ENCODE measurements at regions of chr1 and their contacts with region 1.

Region 1: DNA sequence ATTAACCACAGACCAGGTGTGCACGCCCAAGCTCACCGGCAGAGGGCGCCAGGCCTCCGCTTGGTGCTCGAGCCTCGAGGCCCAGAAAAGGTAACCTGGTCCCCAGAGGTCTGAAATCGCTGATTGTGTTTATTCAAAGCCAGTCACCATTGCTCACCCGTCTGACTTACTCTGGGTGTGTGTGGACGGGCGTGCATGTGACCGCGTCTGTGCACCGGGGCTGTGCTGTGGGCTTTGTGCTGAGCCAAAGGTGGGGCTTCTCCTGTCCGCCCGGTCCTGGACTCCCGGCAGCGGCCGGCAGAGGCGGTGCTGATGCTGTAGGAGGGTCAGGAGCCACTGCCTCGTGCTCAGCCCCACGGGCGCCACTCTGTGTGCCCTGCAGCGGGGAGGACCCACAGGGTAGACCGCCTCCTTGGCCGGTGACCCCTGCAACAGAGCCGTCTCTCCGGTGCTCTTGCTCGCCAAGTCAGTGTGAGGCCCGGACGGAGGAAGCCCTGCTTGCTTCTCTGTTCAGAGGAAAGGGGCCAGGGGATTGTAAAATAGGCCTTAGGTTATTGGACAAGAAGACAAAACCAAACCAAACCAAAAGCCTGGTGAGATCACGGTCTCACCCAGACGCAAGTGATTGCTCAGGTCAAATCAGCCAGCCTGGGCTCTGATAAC is 32.0 kb upstream of the BTG2 start:
- DNase-seq: peak; percentile 86 to 97 (median 92)
- ATAC-seq: peak; percentile 53
- H3K4me3 ChIP-seq: peak overlapping the region; percentile 49
- H3K4me3 Mint-ChIP-seq: peak overlapping the region; percentile 55
- H3K27ac ChIP-seq: peak overlapping the region; percentile 33 to 73
- H3K27ac Mint-ChIP-seq: peak overlapping the region; percentile 85
- H3K4me1 ChIP-seq: peaks cover 75% of the 10 kb centered on the region
- H3K4me1 Mint-ChIP-seq: peaks cover 63% of the 10 kb centered on the region
- H3K27me3 ChIP-seq: no peaks in the 10 kb centered on the region
- H3K27me3 Mint-ChIP-seq: no peaks in the 10 kb centered on the region
- CTCF ChIP-seq: peak; percentile 97

Region 2: DNA sequence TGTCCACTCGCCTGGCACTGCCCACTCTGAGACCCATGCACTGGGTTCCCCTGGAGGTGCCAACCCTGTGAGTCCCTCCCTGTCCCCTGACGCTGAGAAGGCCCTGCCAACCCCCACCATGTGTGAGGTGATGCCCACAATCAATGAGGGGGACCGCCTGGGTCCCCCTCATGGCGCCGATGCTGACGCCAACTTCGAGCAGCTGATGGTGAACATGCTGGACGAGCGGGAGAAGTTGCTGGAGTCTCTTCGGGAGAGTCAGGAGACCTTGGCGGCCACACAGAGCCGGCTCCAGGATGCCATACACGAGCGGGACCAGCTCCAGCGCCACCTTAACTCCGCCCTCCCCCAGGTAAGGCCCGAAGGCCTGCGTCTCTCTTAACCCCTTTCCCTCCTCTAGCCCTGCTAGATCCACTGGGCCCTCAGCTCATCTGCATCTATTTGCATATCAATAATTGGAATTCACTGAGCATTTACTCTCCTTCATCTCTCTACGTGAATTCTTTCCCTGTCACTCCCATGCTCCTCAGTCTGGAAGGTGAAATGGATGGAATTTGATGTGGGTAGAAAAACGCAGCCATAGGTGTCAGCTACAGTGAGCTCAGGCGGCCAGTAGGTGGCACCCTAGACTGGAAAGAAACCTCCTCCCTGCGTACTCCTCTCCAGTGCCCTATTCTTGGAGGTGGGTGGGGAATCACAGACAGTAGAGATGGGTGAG is 234.3 kb before region 1 on chr1:
- CTCF ChIA-PET with region 1: interaction called, 3 read pairs
- POLR2A ChIA-PET with region 1: no interaction called
- intact Hi-C with region 1: loop called (anchors 2 kb)
- DNase-seq: peak; percentile 39 to 80 (median 53)
- ATAC-seq: peak; percentile 94
- H3K4me3 ChIP-seq: no peak overlapping the region
- H3K4me3 Mint-ChIP-seq: no peak overlapping the region
- H3K27ac ChIP-seq: no peak overlapping the region
- H3K27ac Mint-ChIP-seq: no peak overlapping the region
- H3K4me1 ChIP-seq: no peaks in the 10 kb centered on the region
- H3K4me1 Mint-ChIP-seq: no peaks in the 10 kb centered on the region
- H3K27me3 ChIP-seq: peaks cover 4 to 6% of the 10 kb centered on the region in 2 experiments
- H3K27me3 Mint-ChIP-seq: peaks cover 6% of the 10 kb centered on the region
- CTCF ChIP-seq: peak; percentile 81

Region 3: DNA sequence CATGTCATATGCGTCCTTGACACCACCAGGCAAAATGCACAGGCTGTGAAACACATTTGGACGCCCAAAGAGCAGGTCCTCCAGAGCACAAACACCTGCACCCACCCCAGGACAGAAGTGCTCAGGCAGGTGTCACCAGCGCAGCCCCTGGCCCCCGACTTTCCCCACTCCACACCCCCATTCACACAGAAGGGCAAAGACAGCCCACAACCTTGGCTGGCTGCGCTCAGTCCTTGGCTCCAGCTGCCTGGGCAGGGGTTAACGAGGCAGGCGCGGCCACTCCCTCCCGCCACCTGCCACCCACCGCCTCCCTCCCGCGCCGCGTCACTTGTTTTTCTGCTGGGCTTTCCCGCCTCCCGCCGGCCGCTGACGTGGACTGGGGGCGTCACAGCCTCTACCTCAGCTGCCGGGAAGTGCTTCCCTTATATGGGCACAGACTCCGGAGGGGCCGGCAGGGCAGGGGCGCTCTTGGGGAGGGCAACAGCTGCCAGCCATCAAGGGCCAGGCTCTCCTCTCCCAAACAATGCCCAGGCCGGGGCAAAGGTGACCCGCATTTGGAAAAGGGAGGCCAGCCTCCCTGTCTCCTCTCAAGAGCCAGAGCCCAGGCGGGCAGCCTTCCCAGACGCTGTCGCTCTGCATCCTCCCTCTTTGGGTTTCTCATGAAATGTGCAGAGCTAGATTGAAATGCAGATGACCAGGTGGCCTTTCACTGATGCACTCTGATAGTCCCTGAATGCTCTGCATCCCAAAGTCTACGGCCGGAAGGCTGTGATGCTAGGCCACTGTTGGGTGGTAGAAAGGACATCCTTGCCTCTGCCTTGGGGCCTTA is 17.1 kb after region 1 on chr1:
- CTCF ChIA-PET with region 1: interaction called, 34 read pairs
- POLR2A ChIA-PET with region 1: interaction called, 187 read pairs
- intact Hi-C with region 1: loop called (anchors 1 kb)
- DNase-seq: peak; percentile 95 to 99 (median 98)
- ATAC-seq: peak; percentile 55
- H3K4me3 ChIP-seq: peak overlapping the region; percentile 52
- H3K4me3 Mint-ChIP-seq: peak overlapping the region; percentile 88
- H3K27ac ChIP-seq: peak overlapping the region; percentile 99
- H3K27ac Mint-ChIP-seq: peak overlapping the region; percentile 100
- H3K4me1 ChIP-seq: peaks cover 63% of the 10 kb centered on the region
- H3K4me1 Mint-ChIP-seq: peaks cover 91% of the 10 kb centered on the region
- H3K27me3 ChIP-seq: no peaks in the 10 kb centered on the region
- H3K27me3 Mint-ChIP-seq: no peaks in the 10 kb centered on the region
- CTCF ChIP-seq: no peak

Region 4: GRCh38 chr1:203299169-203299568 is 25.8 kb after region 1 on chr1:
- CTCF ChIA-PET with region 1: interaction called, 15 read pairs
- POLR2A ChIA-PET with region 1: interaction called, 6 read pairs
- intact Hi-C with region 1: no loop called
- DNase-seq: peak in 1 of 14 experiments; percentile 38
- ATAC-seq: peak; percentile 39
- H3K4me3 ChIP-seq: no peak overlapping the region
- H3K4me3 Mint-ChIP-seq: no peak overlapping the region
- H3K27ac ChIP-seq: no peak overlapping the region
- H3K27ac Mint-ChIP-seq: no peak overlapping the region
- H3K4me1 ChIP-seq: peaks cover 27% of the 10 kb centered on the region
- H3K4me1 Mint-ChIP-seq: peaks cover 76% of the 10 kb centered on the region
- H3K27me3 ChIP-seq: no peaks in the 10 kb centered on the region
- H3K27me3 Mint-ChIP-seq: no peaks in the 10 kb centered on the region
- CTCF ChIP-seq: no peak

Region 5: GRCh38 chr1:203304919-203305808 is 31.8 kb after region 1 on chr1 and contains the start of gene BTG2:
- CTCF ChIA-PET with region 1: interaction called, 81 read pairs
- POLR2A ChIA-PET with region 1: interaction called, 320 read pairs
- intact Hi-C with region 1: loop called (anchors 1 kb)
- DNase-seq: peak; percentile 84 to 97 (median 90)
- ATAC-seq: peak; percentile 78
- H3K4me3 ChIP-seq: peak within 1 kb of the TSS; percentile 73
- H3K4me3 Mint-ChIP-seq: peak within 1 kb of the TSS; percentile 95
- H3K27ac ChIP-seq: peak within 1 kb of the TSS; percentile 97 to 98
- H3K27ac Mint-ChIP-seq: peak within 1 kb of the TSS; percentile 98
- H3K4me1 ChIP-seq: peaks cover 54% of the 10 kb centered on the region
- H3K4me1 Mint-ChIP-seq: peaks cover 71% of the 10 kb centered on the region
- H3K27me3 ChIP-seq: no peaks in the 10 kb centered on the region
- H3K27me3 Mint-ChIP-seq: no peaks in the 10 kb centered on the region
- CTCF ChIP-seq: no peak
- total RNA-seq, gene BTG2: 802 to 849 TPM

Region 6: DNA sequence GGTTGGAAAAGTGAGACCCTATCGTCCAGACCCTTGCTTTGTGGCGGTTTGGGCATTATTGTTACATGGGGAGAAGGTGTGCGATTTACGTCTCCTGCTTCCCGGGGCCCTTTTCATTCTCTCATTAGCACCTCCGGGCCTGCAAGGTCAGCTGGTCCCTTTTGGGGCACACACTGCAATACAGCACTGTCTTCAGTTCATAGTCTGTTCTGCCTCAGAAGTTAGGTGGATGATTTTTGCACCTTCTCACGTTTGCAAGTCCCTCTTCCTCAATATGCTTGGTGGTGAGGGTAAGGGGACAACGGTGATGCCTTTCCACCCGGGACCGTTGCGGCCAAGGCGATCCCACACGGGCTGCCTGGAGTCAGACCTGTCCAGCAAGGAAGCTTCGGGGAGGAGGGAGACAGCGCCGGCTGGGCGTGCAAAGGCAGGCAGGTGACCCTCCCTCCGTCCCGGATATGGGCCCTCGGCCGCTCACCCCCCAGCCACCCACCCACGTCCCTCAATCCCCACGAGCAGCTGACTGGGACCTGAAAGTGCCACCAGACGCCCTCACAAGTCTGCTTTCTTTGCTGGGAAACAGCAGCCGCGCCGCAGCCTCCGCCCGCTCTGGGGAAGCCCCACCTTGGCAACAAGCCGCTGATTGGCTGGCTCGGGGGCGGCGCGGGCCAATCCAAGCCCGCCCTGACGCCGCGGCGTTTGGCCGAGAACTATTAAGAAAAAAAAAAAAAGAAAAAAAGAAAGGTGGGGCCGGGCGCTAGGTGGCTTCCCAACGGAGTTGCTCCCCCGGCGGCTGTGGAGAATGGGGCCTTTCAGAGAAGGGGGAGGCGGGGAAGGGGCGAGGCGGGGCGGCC is 53.7 kb after region 1 on chr1:
- CTCF ChIA-PET with region 1: interaction called, 260 read pairs
- POLR2A ChIA-PET with region 1: interaction called, 290 read pairs
- intact Hi-C with region 1: loop called (anchors 1 kb)
- DNase-seq: peak; percentile 89 to 97 (median 94)
- ATAC-seq: peak; percentile 65
- H3K4me3 ChIP-seq: peak overlapping the region; percentile 66
- H3K4me3 Mint-ChIP-seq: peak overlapping the region; percentile 81
- H3K27ac ChIP-seq: peak overlapping the region; percentile 98 to 99
- H3K27ac Mint-ChIP-seq: peak overlapping the region; percentile 92
- H3K4me1 ChIP-seq: peaks cover 67% of the 10 kb centered on the region
- H3K4me1 Mint-ChIP-seq: peaks cover 72% of the 10 kb centered on the region
- H3K27me3 ChIP-seq: no peaks in the 10 kb centered on the region
- H3K27me3 Mint-ChIP-seq: no peaks in the 10 kb centered on the region
- CTCF ChIP-seq: no peak

Region 7: DNA sequence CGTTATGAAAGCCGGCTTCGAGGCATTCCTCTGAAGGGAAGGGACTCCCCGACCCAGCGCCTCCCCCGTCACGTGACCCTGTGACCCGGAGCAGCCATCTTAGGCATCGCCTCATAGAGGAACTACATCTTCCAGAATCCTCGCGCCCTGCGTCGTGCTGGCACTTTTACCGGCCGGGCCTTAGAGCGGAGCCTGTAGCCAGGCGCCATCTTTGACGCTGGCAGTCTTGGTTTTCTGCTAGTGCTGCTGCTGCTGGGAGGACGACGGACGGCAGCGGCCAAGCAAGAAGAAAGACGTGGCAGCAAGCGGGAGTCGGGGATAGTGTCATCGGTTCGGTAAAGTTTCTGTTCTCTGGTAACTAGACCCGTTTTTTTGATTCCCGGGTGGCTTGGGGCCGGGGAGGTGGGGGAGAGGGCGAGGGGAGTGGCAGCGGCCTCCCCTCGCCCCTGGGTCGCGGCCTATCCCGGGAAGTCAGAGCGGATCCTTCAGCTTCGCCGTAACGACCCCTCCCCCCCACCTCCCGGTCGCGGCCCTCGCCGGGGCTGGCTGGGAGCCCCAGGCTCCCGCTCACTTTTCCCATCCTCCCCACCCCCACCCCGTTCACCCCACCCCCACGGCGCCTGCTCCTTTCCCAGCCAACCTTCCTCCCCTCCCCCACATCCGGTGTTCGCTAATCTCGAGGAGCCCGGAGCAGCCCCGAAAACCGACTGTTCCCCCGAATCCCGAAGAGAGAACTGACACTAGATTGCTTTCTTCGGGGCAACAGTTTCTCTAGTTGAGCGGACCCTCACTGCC is 522.3 kb after region 1 on chr1 and contains the starts of genes ZBED6 and ZC3H11A:
- CTCF ChIA-PET with region 1: no interaction called
- POLR2A ChIA-PET with region 1: no interaction called
- intact Hi-C with region 1: loop called in 1 of 2 experiments (anchors 10 kb)
- DNase-seq: peak; percentile 96 to 100 (median 98)
- ATAC-seq: peak; percentile 98
- H3K4me3 ChIP-seq: peak within 1 kb of the TSS; percentile 83
- H3K4me3 Mint-ChIP-seq: peak within 1 kb of the TSS; percentile 98
- H3K27ac ChIP-seq: peak within 1 kb of the TSS; percentile 83 to 87
- H3K27ac Mint-ChIP-seq: peak within 1 kb of the TSS; percentile 86
- H3K4me1 ChIP-seq: peaks cover 32% of the 10 kb centered on the region
- H3K4me1 Mint-ChIP-seq: peaks cover 56% of the 10 kb centered on the region
- H3K27me3 ChIP-seq: no peaks in the 10 kb centered on the region
- H3K27me3 Mint-ChIP-seq: no peaks in the 10 kb centered on the region
- CTCF ChIP-seq: no peak
- total RNA-seq, gene ZBED6: 25.0 to 25.2 TPM
- total RNA-seq, gene ZC3H11A: 67.6 to 73.3 TPM